ENCODE measurements at regions of chr4 and their contacts with region 1.

Region 1: DNA sequence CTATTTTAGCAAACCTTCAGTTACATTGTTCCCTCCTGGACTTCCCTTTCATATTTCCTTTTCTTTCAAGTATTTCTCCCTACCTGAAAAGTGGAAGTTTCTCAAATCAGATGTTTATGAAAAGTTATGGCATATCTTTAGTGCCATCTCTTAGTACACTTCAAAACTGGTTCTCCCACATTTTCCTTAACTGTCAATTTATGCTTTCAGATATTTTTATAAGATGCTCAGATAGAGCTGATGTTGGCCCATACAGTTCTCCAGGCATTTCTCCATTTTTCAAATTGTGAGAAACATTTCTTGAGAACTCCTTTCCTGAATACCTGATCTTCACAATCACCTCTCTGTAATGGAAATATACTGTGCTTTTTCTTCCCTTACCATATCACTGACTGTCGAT is 32.5 kb upstream of the AP1AR start:
- DNase-seq: no peak
- H3K4me3 Mint-ChIP-seq: no peak overlapping the region
- H3K27ac Mint-ChIP-seq: no peak overlapping the region
- H3K4me1 Mint-ChIP-seq: peaks cover 17% of the 10 kb centered on the region
- H3K27me3 Mint-ChIP-seq: peaks cover 1% of the 10 kb centered on the region

Region 2: DNA sequence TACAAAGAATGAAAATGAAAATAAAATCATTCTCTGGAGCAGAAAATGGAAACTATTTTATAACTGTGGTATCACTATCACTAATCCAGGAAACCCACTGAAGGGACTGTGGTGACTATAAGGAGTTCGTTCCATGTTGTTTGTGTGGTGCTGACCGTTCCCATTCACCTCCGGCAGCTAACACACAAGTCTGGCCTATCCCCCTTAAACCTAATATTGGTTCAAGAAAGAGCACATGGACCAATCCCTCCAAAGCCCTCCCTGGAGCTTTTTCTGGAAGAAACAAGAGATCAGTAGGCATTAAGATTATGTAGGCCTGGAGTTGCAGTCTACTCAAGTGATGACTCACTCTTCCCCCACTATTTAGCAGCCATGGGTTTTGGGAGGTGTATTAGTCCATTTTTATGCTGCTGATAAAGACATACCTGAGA is 79.7 kb before region 1 on chr4:
- intact Hi-C with region 1: loop called (anchors 1 kb)
- DNase-seq: peak; percentile 76
- H3K4me3 Mint-ChIP-seq: peak overlapping the region; percentile 58
- H3K27ac Mint-ChIP-seq: peak overlapping the region; percentile 97
- H3K4me1 Mint-ChIP-seq: peaks cover 21% of the 10 kb centered on the region
- H3K27me3 Mint-ChIP-seq: peaks cover 6% of the 10 kb centered on the region

Region 3: DNA sequence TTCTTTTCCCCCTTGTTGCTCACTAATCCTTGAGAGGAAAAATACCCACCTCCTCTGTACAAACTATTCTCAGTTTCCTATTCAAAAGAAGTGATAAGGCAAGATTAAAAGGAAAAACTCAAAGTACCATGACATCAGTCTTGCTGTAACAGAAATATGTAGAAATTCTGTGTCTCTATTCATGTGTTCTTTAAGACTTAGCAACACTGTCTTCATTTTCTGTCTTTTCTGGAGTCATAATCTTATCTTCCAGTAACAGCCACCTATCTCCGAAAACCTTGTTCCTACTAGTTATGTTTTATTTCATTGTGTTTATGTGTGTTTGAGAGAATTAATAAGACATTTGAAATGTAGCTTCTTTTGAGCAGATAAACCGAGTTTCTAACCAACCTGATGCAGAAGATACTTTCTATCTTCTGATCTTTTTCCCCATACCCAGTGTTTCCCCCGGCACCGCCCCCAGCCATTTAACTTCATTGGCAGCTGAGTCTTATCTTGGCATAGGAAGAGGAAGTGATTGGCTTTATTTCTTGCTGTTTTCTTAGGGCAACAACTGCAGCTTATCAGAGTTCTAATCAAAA is 45.7 kb before region 1 on chr4:
- intact Hi-C with region 1: no loop called
- DNase-seq: no peak
- H3K4me3 Mint-ChIP-seq: peak overlapping the region; percentile 65
- H3K27ac Mint-ChIP-seq: peak overlapping the region; percentile 72
- H3K4me1 Mint-ChIP-seq: peaks cover 31% of the 10 kb centered on the region
- H3K27me3 Mint-ChIP-seq: no peaks in the 10 kb centered on the region

Region 4: DNA sequence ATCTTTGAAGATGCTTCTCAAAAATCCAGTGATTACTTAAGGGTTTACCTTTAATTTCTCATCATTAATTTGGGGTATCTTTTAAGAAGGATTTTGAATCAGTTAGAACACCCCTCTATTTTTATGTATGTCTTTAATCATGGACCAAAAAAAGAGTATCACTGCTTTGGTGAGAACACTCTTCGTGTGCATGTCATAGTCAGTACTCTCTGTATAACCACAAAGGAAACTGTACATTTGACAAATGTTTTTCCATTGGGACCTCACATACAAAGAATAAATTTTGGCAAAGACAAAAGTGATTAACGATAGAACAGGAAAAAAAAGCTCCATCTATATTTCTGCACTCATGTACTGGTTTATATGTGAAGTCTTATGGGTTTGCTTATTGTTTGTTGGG is 22.4 kb before region 1 on chr4:
- intact Hi-C with region 1: loop called (anchors 2 kb)
- DNase-seq: no peak
- H3K4me3 Mint-ChIP-seq: no peak overlapping the region
- H3K27ac Mint-ChIP-seq: no peak overlapping the region
- H3K4me1 Mint-ChIP-seq: peaks cover 19% of the 10 kb centered on the region
- H3K27me3 Mint-ChIP-seq: no peaks in the 10 kb centered on the region

Region 5: GRCh38 chr4:112183252-112183651 is 15.8 kb before region 1 on chr4:
- intact Hi-C with region 1: loop called (anchors 1 kb)
- DNase-seq: no peak
- H3K4me3 Mint-ChIP-seq: no peak overlapping the region
- H3K27ac Mint-ChIP-seq: peak overlapping the region; percentile 43
- H3K4me1 Mint-ChIP-seq: peaks cover 24% of the 10 kb centered on the region
- H3K27me3 Mint-ChIP-seq: no peaks in the 10 kb centered on the region

Region 6: DNA sequence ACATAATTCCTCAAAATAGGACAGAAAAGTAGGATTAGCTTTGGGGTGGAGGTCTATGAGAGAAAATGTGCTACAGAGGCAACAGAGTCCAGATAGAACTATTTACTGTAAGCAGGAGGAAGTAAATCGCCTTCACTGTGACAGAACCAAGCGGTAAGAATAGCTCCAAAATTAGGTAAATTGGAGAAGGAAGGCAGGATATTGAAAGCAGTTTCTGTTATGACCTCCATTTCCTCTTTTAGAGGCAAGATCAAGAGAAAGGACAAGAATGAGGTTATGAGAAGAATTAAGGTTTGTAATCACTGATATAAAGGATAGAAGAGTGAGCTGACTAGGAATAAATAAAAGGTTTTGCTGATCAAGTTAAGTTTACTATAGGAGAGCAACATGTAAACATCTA is 361.0 kb after region 1 on chr4:
- intact Hi-C with region 1: no loop called
- DNase-seq: no peak
- H3K4me3 Mint-ChIP-seq: no peak overlapping the region
- H3K27ac Mint-ChIP-seq: no peak overlapping the region
- H3K4me1 Mint-ChIP-seq: peaks cover 4% of the 10 kb centered on the region
- H3K27me3 Mint-ChIP-seq: no peaks in the 10 kb centered on the region

Region 7: GRCh38 chr4:112704991-112705845 is 506.2 kb after region 1 on chr4:
- intact Hi-C with region 1: no loop called
- DNase-seq: peak; percentile 63
- H3K4me3 Mint-ChIP-seq: peak overlapping the region; percentile 79
- H3K27ac Mint-ChIP-seq: peak overlapping the region; percentile 52
- H3K4me1 Mint-ChIP-seq: peaks cover 16% of the 10 kb centered on the region
- H3K27me3 Mint-ChIP-seq: peaks cover 54% of the 10 kb centered on the region

Region 8: GRCh38 chr4:112735474-112735951 is 536.5 kb after region 1 on chr4:
- intact Hi-C with region 1: loop called (anchors 5 kb)
- DNase-seq: peak; percentile 65
- H3K4me3 Mint-ChIP-seq: no peak overlapping the region
- H3K27ac Mint-ChIP-seq: peak overlapping the region; percentile 57
- H3K4me1 Mint-ChIP-seq: peaks cover 14% of the 10 kb centered on the region
- H3K27me3 Mint-ChIP-seq: no peaks in the 10 kb centered on the region